MCF 10A (cell line): ENCODE measurements at regions of chr5 and their contacts with region 1.

Region 1: DNA sequence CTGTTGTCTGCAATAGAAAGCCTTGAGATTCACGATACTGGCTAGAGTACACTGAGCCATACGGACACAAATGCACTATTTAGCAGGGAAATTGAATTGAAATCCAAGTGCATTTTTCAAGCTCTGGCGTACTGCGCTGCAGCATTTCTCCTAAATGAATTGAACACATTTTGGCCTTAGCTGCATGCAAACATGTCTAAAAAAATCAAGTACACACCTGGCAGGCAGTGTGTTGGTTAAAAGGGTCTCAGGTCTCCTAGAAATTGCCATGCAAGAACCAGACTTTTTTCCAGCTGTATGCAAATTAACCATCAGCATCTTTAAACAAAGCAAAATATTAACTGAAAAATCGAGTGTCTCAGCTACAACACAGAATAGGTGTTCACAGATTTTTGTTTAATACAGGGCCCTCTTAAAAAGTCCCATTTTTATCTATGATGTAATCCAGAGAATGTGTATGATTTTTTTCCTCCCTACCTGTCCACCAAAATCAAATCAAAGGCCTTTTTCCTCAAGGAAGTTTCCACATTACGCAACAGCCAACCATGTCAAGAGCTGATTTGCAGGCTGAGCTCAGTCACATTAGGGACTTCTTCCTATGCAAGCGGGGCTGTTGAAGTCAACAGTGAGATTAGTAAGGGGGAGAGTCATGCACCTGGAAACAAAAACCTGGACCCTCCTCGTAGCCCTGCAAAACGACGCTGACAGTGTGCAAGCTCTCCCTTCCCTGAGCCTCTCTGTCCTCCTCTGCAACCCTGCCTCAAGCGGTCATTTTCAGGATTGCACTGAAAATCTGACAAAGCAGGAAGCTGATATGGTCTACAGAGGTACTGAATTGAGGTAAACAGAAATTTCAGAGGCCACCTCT is 14.1 kb upstream of the SFXN1 start:
- DNase-seq: peak; percentile 74
- H3K4me3 Mint-ChIP-seq: no peak overlapping the region
- H3K27ac Mint-ChIP-seq: no peak overlapping the region
- H3K4me1 Mint-ChIP-seq: peaks cover 11% of the 10 kb centered on the region
- H3K27me3 Mint-ChIP-seq: peaks cover 13% of the 10 kb centered on the region
- CTCF ChIP-seq: peak; percentile 88

Region 2: GRCh38 chr5:174945853-174946252 is 518.5 kb before region 1 on chr5:
- CTCF ChIA-PET with region 1: interaction called, 80 read pairs
- POLR2A ChIA-PET with region 1: interaction called, 7 read pairs
- intact Hi-C with region 1: loop called (anchors 1 kb)
- DNase-seq: no peak
- H3K4me3 Mint-ChIP-seq: no peak overlapping the region
- H3K27ac Mint-ChIP-seq: no peak overlapping the region
- H3K4me1 Mint-ChIP-seq: no peaks in the 10 kb centered on the region
- H3K27me3 Mint-ChIP-seq: peaks cover 70% of the 10 kb centered on the region
- CTCF ChIP-seq: no peak

Region 3: DNA sequence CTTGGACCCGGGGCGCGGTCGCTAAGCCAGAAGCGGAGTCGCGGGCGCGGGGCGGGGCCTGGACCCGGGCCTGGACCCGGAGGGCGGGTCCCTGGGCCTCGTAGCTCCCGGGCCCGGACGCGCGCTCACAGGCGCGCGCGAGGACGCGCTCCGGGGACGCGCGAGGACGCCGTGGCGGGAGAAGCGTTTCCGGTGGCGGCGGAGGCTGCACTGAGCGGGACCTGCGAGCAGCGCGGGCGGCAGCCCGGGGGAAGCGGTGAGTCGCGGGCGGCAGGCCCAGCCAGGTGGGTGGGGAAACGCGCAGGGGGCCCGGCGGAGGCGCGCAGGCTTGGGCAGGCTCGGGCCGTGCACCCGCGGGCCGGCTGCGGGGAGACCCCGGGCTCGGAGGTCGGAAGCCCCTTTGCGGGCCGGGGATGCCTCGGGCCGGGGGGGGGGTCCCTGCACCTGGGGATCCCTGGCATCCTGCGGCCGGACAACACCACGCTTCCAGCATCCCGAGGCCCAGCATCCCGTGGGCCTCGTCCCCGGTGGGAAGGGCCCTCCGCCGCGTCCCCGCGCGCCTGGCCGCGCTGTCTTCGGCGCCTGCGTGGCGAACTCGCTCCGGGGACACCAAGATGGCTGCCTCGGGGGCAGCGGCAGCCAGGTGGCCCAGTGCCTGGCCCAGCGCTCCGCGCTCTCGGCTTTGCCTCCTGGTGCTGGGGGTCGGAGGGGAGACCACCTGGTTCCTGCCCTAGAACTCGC is 14.2 kb after region 1 on chr5 and contains the start of gene SFXN1:
- CTCF ChIA-PET with region 1: interaction called, 48 read pairs
- POLR2A ChIA-PET with region 1: interaction called, 27 read pairs
- intact Hi-C with region 1: no loop called
- DNase-seq: peak; percentile 75
- H3K4me3 Mint-ChIP-seq: peak within 1 kb of the TSS; percentile 89
- H3K27ac Mint-ChIP-seq: peak within 1 kb of the TSS; percentile 90
- H3K4me1 Mint-ChIP-seq: peaks cover 18% of the 10 kb centered on the region
- H3K27me3 Mint-ChIP-seq: peaks cover 29% of the 10 kb centered on the region
- CTCF ChIP-seq: no peak
- total RNA-seq, gene SFXN1: 86.4 and 91.8 TPM in 2 replicates